HepG2 (cell line): ENCODE measurements at regions of chr11 and their contacts with region 1.

Region 1: GRCh38 chr11:73177778-73178577 is 35.9 kb upstream of the FCHSD2 start:
- DNase-seq: peak; percentile 73
- ATAC-seq: peak; percentile 72
- H3K4me3 ChIP-seq: peak overlapping the region; percentile 24 to 64 (median 29); a peak in 5 of 6 replicates
- H3K27ac ChIP-seq: peak overlapping the region; percentile 99
- H3K4me1 ChIP-seq: peaks cover 71% of the 10 kb centered on the region
- H3K27me3 ChIP-seq: no peaks in the 10 kb centered on the region
- CTCF ChIP-seq: peak; percentile 99
- EP300 ChIP-seq: 0 out of 4 replicates have a peak, but pooled peaks of 1 of the 2 experiments have one; percentile 7
- POLR2A ChIP-seq: no peak
- RAD21 ChIP-seq: peak; percentile 98

Region 2: DNA sequence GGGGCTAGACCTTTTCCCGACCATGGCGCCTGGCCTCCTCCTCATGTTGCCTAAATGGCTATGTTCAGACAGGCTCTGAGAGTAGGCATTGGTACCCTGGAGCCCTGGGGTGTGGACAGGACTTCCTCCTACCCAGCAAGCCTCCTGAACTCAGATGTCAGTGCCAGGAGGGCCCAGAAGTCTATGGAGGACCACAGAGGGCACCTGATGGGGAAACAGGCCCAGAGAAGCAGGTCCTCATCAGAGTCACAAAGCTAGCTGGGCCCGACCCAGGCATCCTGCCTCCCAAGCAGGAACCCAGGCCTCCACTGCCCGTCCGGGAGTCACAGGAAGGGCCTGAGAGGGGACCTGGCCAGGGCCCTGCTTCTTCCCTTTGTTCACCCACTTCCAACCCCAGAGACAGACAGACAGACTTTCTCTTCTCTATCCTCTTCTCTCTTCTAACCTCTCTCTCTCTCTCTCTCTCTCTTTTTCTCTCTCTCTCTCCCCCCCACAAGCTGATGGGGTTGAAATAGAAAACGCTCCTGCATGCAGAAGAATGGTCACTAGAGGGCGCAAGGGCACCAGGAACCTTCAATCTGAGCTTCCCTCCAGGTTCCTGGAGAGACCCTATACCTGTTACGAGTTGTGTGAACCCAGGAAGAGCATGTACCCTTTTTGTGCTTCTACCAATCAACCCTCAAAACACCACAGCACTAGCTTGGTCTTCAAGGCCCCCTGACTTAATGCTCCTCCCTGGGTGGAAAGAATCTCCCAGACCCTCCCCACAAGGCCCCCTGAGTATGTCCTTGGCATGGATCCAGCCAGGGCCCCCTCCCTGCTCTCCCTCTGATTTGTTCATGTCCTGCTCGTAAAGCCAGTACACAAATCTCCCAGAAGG is 452.9 kb before region 1 on chr11:
- CTCF ChIA-PET with region 1: no interaction called
- POLR2A ChIA-PET with region 1: no interaction called
- in situ Hi-C with region 1: no loop called
- intact Hi-C with region 1: loop called (anchors 5 kb)
- DNase-seq: peak; percentile 80
- ATAC-seq: peak; percentile 82
- H3K4me3 ChIP-seq: no peak overlapping the region
- H3K27ac ChIP-seq: no peak overlapping the region
- H3K4me1 ChIP-seq: no peaks in the 10 kb centered on the region
- H3K27me3 ChIP-seq: no peaks in the 10 kb centered on the region
- CTCF ChIP-seq: peak; percentile 91
- EP300 ChIP-seq: no peak
- POLR2A ChIP-seq: no peak
- RAD21 ChIP-seq: peak; percentile 92

Region 3: GRCh38 chr11:72924568-72925190 is 253.3 kb before region 1 on chr11:
- CTCF ChIA-PET with region 1: interaction called, 6 read pairs
- POLR2A ChIA-PET with region 1: no interaction called
- in situ Hi-C with region 1: no loop called
- intact Hi-C with region 1: loop called (anchors 2 kb)
- DNase-seq: peak; percentile 5
- ATAC-seq: no peak
- H3K4me3 ChIP-seq: no peak overlapping the region
- H3K27ac ChIP-seq: no peak overlapping the region
- H3K4me1 ChIP-seq: no peaks in the 10 kb centered on the region
- H3K27me3 ChIP-seq: no peaks in the 10 kb centered on the region
- CTCF ChIP-seq: peak; percentile 32
- EP300 ChIP-seq: no peak
- POLR2A ChIP-seq: no peak
- RAD21 ChIP-seq: no peak

Region 4: GRCh38 chr11:73126804-73127480 is 51.0 kb before region 1 on chr11:
- CTCF ChIA-PET with region 1: no interaction called
- POLR2A ChIA-PET with region 1: interaction called, 6 read pairs
- in situ Hi-C with region 1: no loop called
- intact Hi-C with region 1: loop called (anchors 10 kb)
- DNase-seq: no peak
- ATAC-seq: no peak
- H3K4me3 ChIP-seq: no peak overlapping the region
- H3K27ac ChIP-seq: no peak overlapping the region
- H3K4me1 ChIP-seq: peaks cover 21% of the 10 kb centered on the region; the same call in 1 of the 2 replicates
- H3K27me3 ChIP-seq: no peaks in the 10 kb centered on the region
- CTCF ChIP-seq: no peak
- EP300 ChIP-seq: no peak
- POLR2A ChIP-seq: no peak
- RAD21 ChIP-seq: no peak

Region 5: GRCh38 chr11:73157053-73158010 is 20.6 kb before region 1 on chr11:
- CTCF ChIA-PET with region 1: interaction called, 5 read pairs
- POLR2A ChIA-PET with region 1: interaction called, 78 read pairs
- in situ Hi-C with region 1: no loop called
- intact Hi-C with region 1: loop called (anchors 1 kb)
- DNase-seq: peak; percentile 59
- ATAC-seq: peak; percentile 29
- H3K4me3 ChIP-seq: peak overlapping the region; percentile 9 to 62 (median 23); a peak in 5 of 6 replicates
- H3K27ac ChIP-seq: peak overlapping the region; percentile 74
- H3K4me1 ChIP-seq: peaks cover 98% of the 10 kb centered on the region
- H3K27me3 ChIP-seq: no peaks in the 10 kb centered on the region
- CTCF ChIP-seq: peak; percentile 4; the same call in 1 of the 2 replicates
- EP300 ChIP-seq: no peak
- POLR2A ChIP-seq: no peak
- RAD21 ChIP-seq: no peak